Spleen (tissue), 13 donors: ENCODE measurements at regions of chr4 and their contacts with region 1.

Region 1: GRCh38 chr4:177047070-177047850 is 254.5 kb upstream of the VEGFC start:
- DNase-seq: no peak
- H3K4me3 ChIP-seq: no peak overlapping the region
- H3K27ac ChIP-seq: no peak overlapping the region
- H3K4me1 ChIP-seq: peaks cover 0 to 3% (median 0%) of the 10 kb centered on the region in 6 donors
- H3K27me3 ChIP-seq: peaks cover 0 to 9% (median 0%) of the 10 kb centered on the region in 7 donors
- CTCF ChIP-seq: peak; percentile 29 to 79 (median 63)
- POLR2A ChIP-seq: no peak

Region 2: DNA sequence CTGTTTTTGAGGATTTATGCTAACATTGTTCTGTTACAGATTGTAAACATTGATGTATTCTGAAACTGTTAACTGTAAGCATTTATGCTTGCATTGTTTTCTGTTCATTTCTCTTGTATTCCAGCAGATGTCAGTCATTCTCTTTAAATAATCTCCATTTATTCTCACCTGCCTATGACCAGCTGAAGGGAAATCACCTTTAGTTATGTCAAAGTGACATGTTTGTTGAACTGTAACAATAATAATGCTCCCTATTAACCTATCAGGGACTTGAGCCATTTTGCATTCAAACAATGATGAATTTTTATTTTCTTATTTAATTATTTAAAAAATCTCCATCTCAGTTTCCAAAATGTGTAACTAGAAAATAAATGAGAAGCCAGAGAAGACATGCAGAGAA is 669.5 kb before region 1 on chr4:
- intact Hi-C with region 1: loop called (anchors 5 kb)
- DNase-seq: no peak
- H3K4me3 ChIP-seq: no peak overlapping the region
- H3K27ac ChIP-seq: no peak overlapping the region
- H3K4me1 ChIP-seq: no peaks in the 10 kb centered on the region
- H3K27me3 ChIP-seq: no peaks in the 10 kb centered on the region
- CTCF ChIP-seq: peak in 7 of 11 experiments; percentile 15 to 51 (median 40)
- POLR2A ChIP-seq: no peak

Region 3: DNA sequence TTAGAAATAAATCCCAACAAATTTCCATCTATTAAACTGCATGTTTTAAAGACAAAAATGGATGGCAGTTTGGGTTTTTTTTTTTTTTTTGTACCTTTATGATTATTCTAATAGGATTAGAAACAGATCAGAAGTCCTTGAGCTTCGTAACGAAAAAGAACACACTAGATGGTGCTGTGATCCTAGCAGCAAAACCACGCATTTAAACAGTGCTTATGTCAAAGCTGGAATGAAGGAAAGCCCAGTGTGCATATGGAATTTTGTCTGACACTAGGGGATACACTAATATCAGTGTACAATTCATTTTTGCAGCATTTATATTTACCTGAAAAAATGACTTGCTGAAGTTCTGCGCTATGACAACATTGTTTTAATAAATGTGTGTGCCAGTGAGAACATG is 483.7 kb before region 1 on chr4:
- intact Hi-C with region 1: loop called (anchors 10 kb)
- DNase-seq: no peak
- H3K4me3 ChIP-seq: no peak overlapping the region
- H3K27ac ChIP-seq: no peak overlapping the region
- H3K4me1 ChIP-seq: no peaks in the 10 kb centered on the region
- H3K27me3 ChIP-seq: no peaks in the 10 kb centered on the region
- CTCF ChIP-seq: no peak
- POLR2A ChIP-seq: no peak